OCI-LY7 (cell line): ENCODE measurements at regions of chr6 and their contacts with region 1.

Region 1: GRCh38 chr6:149190224-149190831 is 127.2 kb upstream of the TAB2 start:
- DNase-seq: peak; percentile 63
- H3K4me3 ChIP-seq: no peak overlapping the region
- H3K27ac ChIP-seq: no peak overlapping the region
- H3K4me1 ChIP-seq: no peaks in the 10 kb centered on the region
- CTCF ChIP-seq: peak; percentile 84

Region 2: GRCh38 chr6:149082286-149082707 is 108.0 kb before region 1 on chr6:
- CTCF ChIA-PET with region 1: interaction called, 3 read pairs
- POLR2A ChIA-PET with region 1: interaction called, 3 read pairs
- intact Hi-C with region 1: loop called (anchors 5 kb)
- DNase-seq: peak; percentile 77
- H3K4me3 ChIP-seq: no peak overlapping the region
- H3K27ac ChIP-seq: no peak overlapping the region
- H3K4me1 ChIP-seq: no peaks in the 10 kb centered on the region
- CTCF ChIP-seq: peak; percentile 86

Region 3: GRCh38 chr6:149431905-149432775 is 241.8 kb after region 1 on chr6:
- CTCF ChIA-PET with region 1: interaction called, 3 read pairs
- POLR2A ChIA-PET with region 1: no interaction called
- intact Hi-C with region 1: loop called (anchors 1 kb)
- DNase-seq: peak; percentile 88
- H3K4me3 ChIP-seq: no peak overlapping the region
- H3K27ac ChIP-seq: no peak overlapping the region
- H3K4me1 ChIP-seq: peaks cover 7% of the 10 kb centered on the region
- CTCF ChIP-seq: peak; percentile 95